Mammary epithelial cell (primary cell): ENCODE measurements at regions of chr5 and their contacts with region 1.

Region 1: GRCh38 chr5:68287976-68288706 is 72.6 kb downstream of the PIK3R1 start:
- DNase-seq: peak; percentile 80
- H3K4me3 ChIP-seq: peak overlapping the region; percentile 29 to 55 (median 39)
- H3K27ac ChIP-seq: peak overlapping the region; percentile 65
- H3K4me1 ChIP-seq: peaks cover 50% of the 10 kb centered on the region
- H3K27me3 ChIP-seq: no peaks in the 10 kb centered on the region
- CTCF ChIP-seq: no peak

Region 2: DNA sequence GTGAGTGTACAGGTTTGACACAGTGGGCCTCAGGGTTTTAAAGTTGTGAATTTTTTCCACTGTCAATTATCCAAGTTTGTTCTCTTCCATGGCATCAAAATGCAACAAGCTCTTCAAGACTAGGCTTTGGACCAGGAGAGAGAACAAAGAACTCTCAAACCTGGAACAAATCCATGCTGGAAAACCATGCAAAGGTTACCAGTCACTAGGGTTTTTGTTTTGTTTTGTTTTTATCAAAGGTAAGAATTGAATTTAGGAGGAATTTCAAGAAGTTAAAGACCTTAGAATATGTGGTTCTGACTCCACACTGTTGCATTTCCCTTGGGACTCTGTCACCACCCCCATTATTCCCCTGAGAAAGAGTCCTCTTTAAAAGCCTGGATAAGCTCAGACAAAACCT is 263.7 kb before region 1 on chr5:
- CTCF ChIA-PET with region 1: no interaction called
- dilution Hi-C with region 1: no loop called
- in situ Hi-C with region 1: no loop called
- intact Hi-C with region 1: no loop called
- DNase-seq: no peak
- H3K4me3 ChIP-seq: no peak overlapping the region
- H3K27ac ChIP-seq: no peak overlapping the region
- H3K4me1 ChIP-seq: no peaks in the 10 kb centered on the region
- H3K27me3 ChIP-seq: no peaks in the 10 kb centered on the region
- CTCF ChIP-seq: no peak

Region 3: GRCh38 chr5:68215208-68215897 is 72.8 kb before region 1 on chr5 and contains the start of gene PIK3R1:
- CTCF ChIA-PET with region 1: no interaction called
- dilution Hi-C with region 1: no loop called
- in situ Hi-C with region 1: no loop called
- intact Hi-C with region 1: no loop called
- DNase-seq: peak; percentile 96
- H3K4me3 ChIP-seq: peak within 1 kb of the TSS; percentile 88 to 97 (median 91)
- H3K27ac ChIP-seq: peak within 1 kb of the TSS; percentile 77
- H3K4me1 ChIP-seq: peaks cover 20% of the 10 kb centered on the region
- H3K27me3 ChIP-seq: no peaks in the 10 kb centered on the region
- CTCF ChIP-seq: peak; percentile 22 to 42
- total RNA-seq, gene PIK3R1: 74.3 to 195 TPM

Region 4: DNA sequence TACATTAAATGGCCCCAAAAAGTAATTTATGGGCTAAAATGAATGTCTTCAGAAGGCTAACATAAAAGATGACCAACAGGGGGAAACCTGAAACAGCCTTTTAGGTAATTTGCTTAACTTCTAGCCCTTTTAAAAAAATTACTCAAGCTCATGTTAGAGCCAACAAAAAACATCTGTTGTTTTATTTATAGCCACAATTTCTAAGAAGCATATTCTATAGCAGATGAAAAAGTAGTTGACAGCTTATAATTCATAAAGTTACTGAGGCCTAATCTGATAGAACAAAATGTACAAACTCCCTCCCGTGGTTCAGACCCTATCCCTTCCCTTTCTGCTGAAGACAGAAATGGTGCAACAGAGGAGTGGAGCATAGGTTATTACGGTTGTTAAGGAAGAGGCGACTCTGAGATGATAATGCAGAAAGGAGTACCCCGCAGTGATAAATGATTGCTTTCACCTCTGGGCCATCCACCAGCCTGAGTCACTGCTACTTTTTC is 26.5 kb before region 1 on chr5:
- CTCF ChIA-PET with region 1: no interaction called
- dilution Hi-C with region 1: no loop called
- in situ Hi-C with region 1: no loop called
- intact Hi-C with region 1: no loop called
- DNase-seq: no peak
- H3K4me3 ChIP-seq: no peak overlapping the region
- H3K27ac ChIP-seq: no peak overlapping the region
- H3K4me1 ChIP-seq: peaks cover 19% of the 10 kb centered on the region
- H3K27me3 ChIP-seq: no peaks in the 10 kb centered on the region
- CTCF ChIP-seq: peak in 1 of 2 donors; percentile 17

Region 5: GRCh38 chr5:68333649-68334552 is 45.8 kb after region 1 on chr5:
- CTCF ChIA-PET with region 1: no interaction called
- dilution Hi-C with region 1: no loop called
- in situ Hi-C with region 1: no loop called
- intact Hi-C with region 1: loop called (anchors 1 kb)
- DNase-seq: peak; percentile 94
- H3K4me3 ChIP-seq: no peak overlapping the region
- H3K27ac ChIP-seq: peak overlapping the region; percentile 76
- H3K4me1 ChIP-seq: peaks cover 48% of the 10 kb centered on the region
- H3K27me3 ChIP-seq: no peaks in the 10 kb centered on the region
- CTCF ChIP-seq: peak; percentile 30 to 59

Region 6: DNA sequence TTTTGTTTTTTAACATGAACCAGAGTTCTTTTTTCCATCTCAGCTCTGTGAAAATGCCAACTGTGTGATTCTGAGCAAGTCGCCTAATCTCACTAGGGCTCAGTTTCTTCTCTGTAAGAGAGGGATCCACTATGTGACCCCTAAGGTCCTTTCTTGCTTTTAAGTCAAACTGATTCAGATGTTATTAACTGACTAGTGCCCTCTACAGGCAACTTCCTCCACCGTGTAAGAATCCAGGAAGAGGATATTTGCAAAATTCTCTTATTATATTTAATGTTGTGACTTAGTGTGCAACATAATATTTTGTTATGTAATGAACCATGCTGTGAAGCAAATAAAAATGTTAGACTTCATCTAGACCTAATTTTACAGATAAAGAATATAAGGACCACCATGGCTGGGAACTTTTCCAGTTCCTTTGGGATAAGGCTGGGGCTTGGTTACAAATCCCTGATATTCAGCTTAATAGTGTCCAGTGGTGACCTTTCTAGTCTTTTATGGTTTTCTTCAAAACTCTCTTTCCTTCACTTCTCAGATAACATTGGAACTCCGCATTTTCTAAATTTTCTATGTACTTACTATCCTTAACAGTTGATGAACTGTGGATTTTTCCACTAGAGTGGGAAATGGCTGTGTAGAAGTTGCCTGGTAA is 172.1 kb after region 1 on chr5:
- CTCF ChIA-PET with region 1: interaction called, 5 read pairs
- dilution Hi-C with region 1: no loop called
- in situ Hi-C with region 1: loop called (anchors 5 kb)
- intact Hi-C with region 1: loop called (anchors 1 kb)
- DNase-seq: peak; percentile 40
- H3K4me3 ChIP-seq: no peak overlapping the region
- H3K27ac ChIP-seq: no peak overlapping the region
- H3K4me1 ChIP-seq: peaks cover 19% of the 10 kb centered on the region
- H3K27me3 ChIP-seq: no peaks in the 10 kb centered on the region
- CTCF ChIP-seq: peak; percentile 68 to 74

Region 7: GRCh38 chr5:68661237-68661636 is 373.1 kb after region 1 on chr5:
- CTCF ChIA-PET with region 1: no interaction called
- dilution Hi-C with region 1: no loop called
- in situ Hi-C with region 1: loop called (anchors 25 kb)
- intact Hi-C with region 1: loop called (anchors 2 kb)
- DNase-seq: peak; percentile 32
- H3K4me3 ChIP-seq: no peak overlapping the region
- H3K27ac ChIP-seq: no peak overlapping the region
- H3K4me1 ChIP-seq: no peaks in the 10 kb centered on the region
- H3K27me3 ChIP-seq: no peaks in the 10 kb centered on the region
- CTCF ChIP-seq: peak; percentile 41 to 62

Region 8: GRCh38 chr5:68884883-68885282 is 596.7 kb after region 1 on chr5:
- CTCF ChIA-PET with region 1: no interaction called
- dilution Hi-C with region 1: no loop called
- in situ Hi-C with region 1: no loop called
- intact Hi-C with region 1: loop called (anchors 5 kb)
- DNase-seq: peak; percentile 11
- H3K4me3 ChIP-seq: no peak overlapping the region
- H3K27ac ChIP-seq: no peak overlapping the region
- H3K4me1 ChIP-seq: no peaks in the 10 kb centered on the region
- H3K27me3 ChIP-seq: peaks cover 1% of the 10 kb centered on the region
- CTCF ChIP-seq: peak; percentile 42

Region 9: DNA sequence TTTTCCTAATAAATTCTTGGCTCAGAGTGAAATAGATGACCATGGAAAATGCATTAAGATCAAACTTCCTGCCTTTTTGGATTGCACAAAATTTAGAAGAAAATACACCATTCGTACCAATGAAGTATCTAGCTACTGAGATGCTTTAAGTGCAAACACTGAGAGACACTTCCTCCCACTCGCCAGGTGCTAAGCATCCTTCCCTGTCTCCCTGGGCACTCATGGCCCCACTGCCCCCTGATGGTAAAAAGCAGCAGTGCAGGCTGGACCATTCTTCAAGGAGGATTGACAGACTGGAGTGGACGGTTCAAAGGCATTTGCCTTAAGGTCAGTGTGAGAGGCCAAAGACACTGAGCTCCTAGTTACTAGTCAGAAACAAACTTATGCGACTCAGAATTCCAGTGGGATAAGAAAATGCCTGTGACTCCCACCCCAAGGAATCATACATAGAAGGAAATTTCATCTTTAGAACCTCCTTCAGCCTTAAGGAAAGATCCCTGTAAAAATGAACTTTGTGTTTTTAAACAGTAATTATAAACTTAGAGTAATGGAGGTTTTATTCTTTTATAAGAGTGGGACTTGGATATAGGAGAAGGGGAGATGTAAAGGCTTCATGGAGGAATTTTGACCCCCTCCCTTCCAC is 719.7 kb after region 1 on chr5:
- CTCF ChIA-PET with region 1: no interaction called
- dilution Hi-C with region 1: no loop called
- in situ Hi-C with region 1: no loop called
- intact Hi-C with region 1: loop called (anchors 1 kb)
- DNase-seq: peak; percentile 58
- H3K4me3 ChIP-seq: no peak overlapping the region
- H3K27ac ChIP-seq: no peak overlapping the region
- H3K4me1 ChIP-seq: no peaks in the 10 kb centered on the region
- H3K27me3 ChIP-seq: no peaks in the 10 kb centered on the region
- CTCF ChIP-seq: peak; percentile 99 to 100